Cardiac septum (tissue), 1 donor: ENCODE measurements at regions of chr21 and their contacts with region 1.

Region 1: GRCh38 chr21:34745557-34746255 is 76.9 kb downstream of the CLIC6 start:
- DNase-seq: peak; percentile 83

Region 2: GRCh38 chr21:34874684-34875513 is 129.2 kb after region 1 on chr21:
- intact Hi-C with region 1: no loop called
- DNase-seq: no peak

Region 3: DNA sequence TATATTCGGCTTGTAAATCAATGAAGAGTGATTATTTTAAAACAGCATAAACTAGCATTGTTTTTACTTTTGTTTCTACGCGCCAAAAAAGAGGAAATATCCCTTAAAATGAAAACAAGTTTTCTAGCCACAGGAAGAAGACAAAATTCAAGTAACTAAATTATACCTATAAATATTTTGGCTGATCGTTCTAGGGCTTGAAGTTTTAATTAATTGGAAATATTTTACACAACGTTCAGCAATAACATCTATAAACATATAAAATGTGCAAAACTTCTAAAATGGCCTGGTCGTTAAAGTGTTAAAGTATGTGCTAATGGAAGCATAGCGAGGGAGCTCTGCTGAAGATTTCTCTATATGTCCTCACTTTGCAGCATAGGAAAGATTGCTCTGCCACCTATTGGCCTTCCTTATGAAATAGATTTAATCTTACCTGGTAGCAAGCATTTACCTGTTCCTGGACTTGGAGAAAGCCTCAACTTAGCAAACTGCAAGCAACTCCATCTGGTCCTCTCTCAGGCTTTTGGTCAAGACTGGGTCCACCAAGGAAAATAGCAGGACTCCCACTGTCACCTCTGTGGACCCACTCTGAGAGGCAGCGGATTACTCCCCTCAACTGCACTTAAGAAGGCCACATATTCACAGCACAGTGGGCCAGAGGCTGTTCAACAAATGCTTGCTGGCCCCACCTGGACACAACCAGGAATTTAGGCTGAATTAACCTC is 654.7 kb after region 1 on chr21:
- intact Hi-C with region 1: loop called (anchors 10 kb)
- DNase-seq: no peak

Region 4: DNA sequence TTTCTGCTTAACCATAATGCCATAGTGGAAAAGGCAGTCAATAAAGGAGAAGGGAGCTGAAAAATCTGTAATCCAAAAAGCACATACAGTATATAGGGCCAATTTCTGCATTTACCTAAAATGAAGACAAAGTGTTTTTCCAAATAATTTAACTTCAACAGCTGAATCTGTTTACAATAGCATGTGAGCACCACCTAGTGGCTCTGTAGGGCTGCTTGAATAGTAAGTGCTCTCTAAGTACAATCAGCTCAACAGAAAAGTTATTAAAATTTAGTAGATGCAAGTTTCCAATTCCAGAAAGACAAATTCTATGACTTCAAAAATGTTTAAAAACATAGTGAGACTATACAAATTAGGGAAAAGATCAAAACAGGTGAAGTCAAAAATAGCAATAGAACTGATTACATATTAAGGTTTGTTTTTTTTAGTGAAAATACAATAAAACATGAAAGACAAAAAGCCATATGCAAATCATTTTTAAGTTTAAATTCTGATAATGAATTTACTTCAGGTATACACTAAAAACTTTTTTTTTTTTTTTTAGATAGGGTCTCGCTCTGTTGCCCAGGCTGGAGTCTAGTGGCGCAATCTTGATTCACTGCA is 1094.6 kb after region 1 on chr21:
- intact Hi-C with region 1: loop called (anchors 5 kb)
- DNase-seq: no peak

Region 5: GRCh38 chr21:35940074-35940927 is 1194.6 kb after region 1 on chr21:
- intact Hi-C with region 1: loop called (anchors 5 kb)
- DNase-seq: no peak